Activated naive CD4-positive, alpha-beta T cell treated with anti-CD3 and anti-CD28 coated beads, Interleukin-2, amount 10 ng/mL, durations not matched to agents 7 days and 5 days (primary cell): ENCODE measurements at regions of chr4 and their contacts with region 1.

Region 1: GRCh38 chr4:147866532-147867271 is 134.8 kb downstream of the ARHGAP10 start:
- DNase-seq: peak; percentile 96
- H3K4me3 Mint-ChIP-seq: no peak overlapping the region
- H3K27ac Mint-ChIP-seq: no peak overlapping the region
- H3K4me1 Mint-ChIP-seq: peaks cover 2% of the 10 kb centered on the region
- H3K27me3 Mint-ChIP-seq: no peaks in the 10 kb centered on the region

Region 2: GRCh38 chr4:147518846-147519767 is 347.6 kb before region 1 on chr4:
- CTCF ChIA-PET with region 1: interaction called, 41 read pairs
- DNase-seq: peak; percentile 68
- H3K4me3 Mint-ChIP-seq: no peak overlapping the region
- H3K27ac Mint-ChIP-seq: no peak overlapping the region
- H3K4me1 Mint-ChIP-seq: no peaks in the 10 kb centered on the region
- H3K27me3 Mint-ChIP-seq: peaks cover 3% of the 10 kb centered on the region

Region 3: GRCh38 chr4:147596981-147597380 is 269.7 kb before region 1 on chr4:
- CTCF ChIA-PET with region 1: interaction called, 65 read pairs
- DNase-seq: no peak
- H3K4me3 Mint-ChIP-seq: no peak overlapping the region
- H3K27ac Mint-ChIP-seq: no peak overlapping the region
- H3K4me1 Mint-ChIP-seq: no peaks in the 10 kb centered on the region
- H3K27me3 Mint-ChIP-seq: peaks cover 4% of the 10 kb centered on the region

Region 4: DNA sequence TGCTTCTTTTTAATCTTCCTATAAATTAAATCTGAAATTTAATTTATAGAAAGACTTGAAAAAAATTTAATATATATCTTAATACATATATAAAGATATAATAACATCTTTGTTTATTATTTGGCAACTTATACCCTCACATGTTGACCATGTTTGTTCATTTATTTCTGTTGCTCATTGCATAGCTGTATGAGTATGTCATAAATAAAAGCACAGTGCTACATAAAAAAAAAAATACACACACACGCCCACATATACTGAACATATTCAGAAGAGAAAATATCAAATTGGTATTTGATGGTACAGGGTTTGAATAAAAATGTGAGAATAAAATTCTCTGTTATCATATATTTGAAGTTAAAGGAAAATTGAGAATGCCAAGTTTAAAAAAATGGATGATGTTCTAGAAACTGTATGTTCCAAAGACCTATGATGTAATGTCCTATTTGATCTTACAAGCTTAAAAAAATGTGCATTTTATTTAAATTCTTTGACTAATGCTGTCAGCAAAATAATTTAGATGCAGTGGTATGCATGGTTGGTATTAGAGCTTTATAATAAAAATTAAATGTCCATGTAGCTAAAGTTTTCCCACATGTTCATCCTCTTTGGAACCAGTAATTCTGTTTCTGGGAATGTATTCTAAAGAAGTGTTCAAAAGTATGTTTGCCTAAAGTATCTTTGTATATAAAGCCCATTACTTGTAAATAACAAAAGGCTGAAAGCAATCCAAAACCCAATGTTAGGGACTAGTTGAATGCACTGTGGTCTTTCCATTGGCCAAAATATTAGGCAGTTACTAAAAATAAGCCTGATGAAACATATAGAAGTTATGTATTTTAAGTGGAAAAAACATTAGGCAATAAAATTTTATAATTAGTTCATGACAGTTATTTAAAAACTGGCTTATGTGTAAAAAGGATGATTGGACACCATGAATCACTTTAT is 236.6 kb before region 1 on chr4:
- CTCF ChIA-PET with region 1: interaction called, 10 read pairs
- DNase-seq: no peak
- H3K4me3 Mint-ChIP-seq: no peak overlapping the region
- H3K27ac Mint-ChIP-seq: no peak overlapping the region
- H3K4me1 Mint-ChIP-seq: no peaks in the 10 kb centered on the region
- H3K27me3 Mint-ChIP-seq: no peaks in the 10 kb centered on the region

Region 5: DNA sequence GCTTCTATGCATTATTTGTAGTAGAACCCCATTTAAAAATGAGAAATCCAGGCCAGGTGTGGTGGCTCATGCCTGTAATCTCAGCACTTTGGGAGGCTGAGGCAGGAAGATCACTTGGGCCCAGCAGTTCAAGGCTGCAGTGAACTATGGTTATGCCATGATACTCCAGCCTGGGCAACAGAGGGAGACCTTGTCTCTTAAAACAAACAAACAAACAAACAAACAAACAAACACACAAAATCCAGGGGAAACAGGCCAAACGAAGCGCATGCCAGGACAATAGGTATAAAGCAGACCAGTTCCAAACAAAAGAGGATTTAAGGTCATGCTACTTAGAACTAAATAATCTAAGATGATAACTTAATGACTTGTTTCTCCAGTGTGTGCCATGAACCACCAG is 143.9 kb before region 1 on chr4:
- CTCF ChIA-PET with region 1: interaction called, 11 read pairs
- DNase-seq: no peak
- H3K4me3 Mint-ChIP-seq: no peak overlapping the region
- H3K27ac Mint-ChIP-seq: no peak overlapping the region
- H3K4me1 Mint-ChIP-seq: no peaks in the 10 kb centered on the region
- H3K27me3 Mint-ChIP-seq: peaks cover 18% of the 10 kb centered on the region

Region 6: DNA sequence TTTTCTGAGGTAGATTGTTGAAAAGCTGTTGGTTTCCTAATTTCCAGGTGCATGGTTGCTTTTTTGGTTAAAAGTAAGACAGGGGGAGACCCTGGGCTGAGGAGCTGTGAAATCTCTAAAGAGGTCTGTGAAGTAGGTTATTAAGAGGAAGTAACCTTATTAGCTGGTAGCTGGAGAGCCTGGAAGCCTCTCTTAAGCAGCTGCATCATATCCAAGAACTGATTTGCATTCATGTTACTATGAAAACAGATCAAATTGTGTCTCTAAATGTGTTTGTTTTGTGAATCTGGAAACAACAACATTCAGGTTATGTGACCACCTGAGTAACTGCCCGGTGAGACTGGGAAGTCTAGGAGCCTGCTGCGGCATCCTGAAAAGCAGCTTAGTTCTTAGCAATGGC is 80.7 kb before region 1 on chr4:
- CTCF ChIA-PET with region 1: interaction called, 15 read pairs
- DNase-seq: no peak
- H3K4me3 Mint-ChIP-seq: no peak overlapping the region
- H3K27ac Mint-ChIP-seq: no peak overlapping the region
- H3K4me1 Mint-ChIP-seq: no peaks in the 10 kb centered on the region
- H3K27me3 Mint-ChIP-seq: peaks cover 10% of the 10 kb centered on the region

Region 7: GRCh38 chr4:147843162-147843561 is 23.5 kb before region 1 on chr4:
- CTCF ChIA-PET with region 1: interaction called, 35 read pairs
- DNase-seq: no peak
- H3K4me3 Mint-ChIP-seq: no peak overlapping the region
- H3K27ac Mint-ChIP-seq: no peak overlapping the region
- H3K4me1 Mint-ChIP-seq: no peaks in the 10 kb centered on the region
- H3K27me3 Mint-ChIP-seq: no peaks in the 10 kb centered on the region